ENCODE measurements at regions of chr10 and their contacts with region 1.

Region 1: DNA sequence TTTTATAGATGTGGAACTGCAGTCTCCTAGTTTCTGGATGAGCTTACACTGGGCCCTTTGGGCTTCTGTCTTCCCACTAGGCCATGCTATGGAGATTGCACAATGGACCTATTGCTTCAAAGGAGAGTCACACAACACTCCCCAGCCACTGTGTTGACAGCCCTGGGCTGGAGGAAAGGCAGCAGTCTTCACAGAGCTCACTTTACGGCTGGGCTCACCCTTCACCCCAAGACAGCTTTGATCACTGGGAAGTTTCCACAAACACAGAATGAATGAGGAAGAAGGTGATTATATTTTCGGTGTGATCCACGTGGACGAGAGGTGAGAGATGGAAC is 92.7 kb upstream of the GDF10 start:
- DNase-seq: no peak
- H3K4me3 Mint-ChIP-seq: peak overlapping the region; percentile 1
- H3K27ac Mint-ChIP-seq: peak overlapping the region; percentile 75
- H3K4me1 Mint-ChIP-seq: peaks cover 38% of the 10 kb centered on the region
- H3K27me3 Mint-ChIP-seq: no peaks in the 10 kb centered on the region

Region 2: DNA sequence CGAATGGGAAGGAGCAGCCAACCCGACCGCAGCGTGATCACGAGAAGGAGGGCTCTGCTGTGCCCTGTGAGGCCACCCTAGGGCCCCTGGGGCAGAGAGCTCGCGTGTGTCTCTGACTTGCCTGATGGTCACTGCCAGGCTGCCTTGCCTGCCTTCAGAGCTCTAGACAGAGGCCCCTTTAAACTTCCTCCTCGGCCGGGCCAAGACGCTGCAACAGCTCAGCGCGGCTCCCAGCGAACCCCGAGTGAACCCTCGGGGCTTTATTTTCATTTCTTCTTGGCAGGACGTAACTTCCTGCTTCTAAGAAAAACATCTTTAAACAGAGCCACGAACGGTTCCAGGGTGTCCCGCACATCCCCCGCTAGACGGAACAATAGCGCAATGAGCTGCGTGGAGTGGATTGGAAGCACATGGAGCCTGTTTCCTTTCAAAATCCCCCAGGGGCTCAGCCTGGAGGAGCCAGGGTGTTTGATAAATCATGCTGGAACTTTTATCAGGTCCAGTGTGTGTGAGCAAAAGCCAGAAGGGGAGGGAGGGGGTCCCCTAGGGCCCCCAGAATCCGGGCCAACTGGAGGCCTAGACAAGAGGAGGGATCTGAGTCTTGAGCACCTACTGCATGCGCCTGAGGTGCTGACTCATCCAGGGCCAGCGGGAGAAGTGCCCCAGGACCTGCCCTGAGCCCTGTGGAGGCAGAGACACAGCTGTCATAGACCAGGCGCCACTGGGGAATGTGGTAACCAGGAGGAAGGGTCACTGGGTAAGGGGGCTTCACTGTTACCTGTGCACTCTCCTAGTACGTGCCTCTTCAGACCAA is 41.3 kb before region 1 on chr10:
- intact Hi-C with region 1: loop called (anchors 5 kb)
- DNase-seq: peak; percentile 23
- H3K4me3 Mint-ChIP-seq: peak overlapping the region; percentile 72
- H3K27ac Mint-ChIP-seq: peak overlapping the region; percentile 74
- H3K4me1 Mint-ChIP-seq: peaks cover 20% of the 10 kb centered on the region
- H3K27me3 Mint-ChIP-seq: no peaks in the 10 kb centered on the region

Region 3: GRCh38 chr10:47261121-47261520 is 53.9 kb after region 1 on chr10:
- intact Hi-C with region 1: loop called (anchors 5 kb)
- DNase-seq: peak; percentile 9
- H3K4me3 Mint-ChIP-seq: no peak overlapping the region
- H3K27ac Mint-ChIP-seq: peak overlapping the region; percentile 89
- H3K4me1 Mint-ChIP-seq: peaks cover 75% of the 10 kb centered on the region
- H3K27me3 Mint-ChIP-seq: no peaks in the 10 kb centered on the region

Measured in activated T-helper 2 cell treated with anti-CD3 and anti-CD28 coated beads, Interferon-gamma antibody, Interleukin-2, Interleukin-4, amounts not matched to agents 10 μg/mL and 5 μg/mL and 100 μg/mL, durations not matched to agents 14 hours and 24 hours and 36 hours (primary cell).